A549 (cell line): ENCODE measurements at regions of chr1 and their contacts with region 1.

Region 1: GRCh38 chr1:17045634-17046333 is 8.0 kb downstream of the SDHB start:
- DNase-seq: peak; percentile 51 to 63
- ATAC-seq: peak in 1 of 2 experiments; percentile 58; a peak in 2 of 6 replicates
- H3K4me3 ChIP-seq: no peak overlapping the region
- H3K27ac ChIP-seq: no peak overlapping the region
- H3K4me1 ChIP-seq: peaks cover 6% of the 10 kb centered on the region; the same call in 1 of the 3 replicates
- CTCF ChIP-seq: peak; percentile 73
- EP300 ChIP-seq: no peak
- POLR2A ChIP-seq: no peak
- RAD21 ChIP-seq: peak; percentile 69 to 76

Region 2: DNA sequence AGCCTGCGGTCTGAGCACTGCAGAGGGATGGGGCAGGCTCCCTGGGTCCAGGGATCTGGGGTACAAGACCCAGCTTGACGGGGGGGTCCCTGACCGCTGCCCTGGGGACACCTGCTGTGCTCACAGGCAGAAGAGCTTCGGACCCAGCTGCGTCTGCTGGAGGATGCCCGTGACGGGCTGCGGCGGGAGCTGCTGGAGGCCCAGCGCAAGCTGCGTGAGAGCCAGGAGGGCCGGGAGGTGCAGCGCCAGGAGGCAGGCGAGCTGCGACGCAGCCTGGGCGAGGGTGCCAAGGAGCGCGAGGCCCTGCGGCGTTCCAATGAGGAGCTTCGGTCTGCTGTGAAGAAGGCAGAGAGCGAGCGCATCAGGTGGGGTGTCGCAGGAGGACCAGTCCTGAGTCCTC is 90.6 kb before region 1 on chr1:
- CTCF ChIA-PET with region 1: interaction called, 80 read pairs
- POLR2A ChIA-PET with region 1: no interaction called
- DNase-seq: no peak
- ATAC-seq: no peak
- H3K4me3 ChIP-seq: no peak overlapping the region
- H3K27ac ChIP-seq: no peak overlapping the region
- H3K4me1 ChIP-seq: peaks cover 2% of the 10 kb centered on the region
- CTCF ChIP-seq: no peak
- EP300 ChIP-seq: no peak
- POLR2A ChIP-seq: no peak
- RAD21 ChIP-seq: no peak

Region 3: DNA sequence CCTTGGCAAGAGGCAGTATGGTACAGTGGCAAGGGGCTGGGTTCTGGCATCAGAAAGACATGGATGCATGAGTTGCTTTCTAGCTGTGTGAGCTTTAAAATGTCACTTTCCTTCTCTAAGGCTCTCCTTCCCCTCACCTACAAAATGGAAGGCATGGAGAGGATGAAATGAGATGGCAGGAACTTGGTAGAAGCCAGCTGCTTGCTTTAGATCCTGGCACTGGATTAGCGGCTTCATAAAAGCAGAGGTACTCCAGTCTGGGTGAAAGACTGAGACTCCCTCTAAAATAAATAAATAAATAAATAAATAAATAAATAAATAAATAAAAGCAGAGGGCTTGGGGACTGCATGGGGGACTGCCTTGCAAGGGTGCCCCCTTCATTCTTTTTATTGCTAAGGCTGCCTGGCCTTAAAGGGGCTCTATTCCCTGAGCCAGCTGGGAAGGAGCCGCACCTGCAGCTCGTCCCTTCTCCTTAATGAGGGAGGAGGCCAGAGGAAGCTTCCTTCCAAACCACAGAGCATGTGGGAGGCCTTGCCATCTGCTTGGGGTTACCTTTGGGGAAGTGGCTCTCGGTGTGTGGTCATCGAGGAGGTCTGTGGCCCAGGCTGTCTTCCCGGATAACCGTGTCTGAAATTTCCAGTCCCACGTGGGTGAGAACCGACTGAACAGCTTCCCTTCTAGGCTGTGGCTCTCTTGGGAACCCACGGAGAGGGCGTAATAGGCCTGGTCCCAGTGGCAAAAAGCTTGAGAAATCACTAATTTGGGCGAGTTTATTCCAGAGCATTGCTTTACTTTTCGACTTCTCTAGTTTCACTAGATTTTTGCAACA is 32.1 kb before region 1 on chr1:
- CTCF ChIA-PET with region 1: interaction called, 15 read pairs
- POLR2A ChIA-PET with region 1: no interaction called
- DNase-seq: no peak
- ATAC-seq: no peak
- H3K4me3 ChIP-seq: no peak overlapping the region
- H3K27ac ChIP-seq: no peak overlapping the region
- H3K4me1 ChIP-seq: peaks cover 16% of the 10 kb centered on the region; the same call in 2 of the 3 replicates
- CTCF ChIP-seq: no peak
- EP300 ChIP-seq: no peak
- POLR2A ChIP-seq: no peak
- RAD21 ChIP-seq: no peak

Region 4: DNA sequence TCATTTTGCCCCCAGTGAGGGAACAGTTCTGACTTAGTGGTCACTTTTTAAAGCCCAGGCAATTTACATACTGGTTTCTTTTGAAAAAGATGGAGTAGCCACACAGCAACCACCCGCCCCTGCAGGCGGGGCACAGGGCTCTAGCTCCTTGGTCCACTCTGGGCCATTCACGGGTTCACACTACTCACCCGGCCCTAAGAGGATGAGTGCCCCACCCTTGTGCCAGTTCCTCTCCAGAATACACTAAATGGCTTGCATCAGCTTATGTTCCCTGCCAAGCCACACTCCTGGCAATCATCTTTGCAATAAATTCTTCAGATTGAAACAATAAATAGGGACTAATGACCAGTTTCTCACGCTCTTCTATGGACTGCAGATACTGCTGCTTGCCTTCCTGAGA is 18.4 kb before region 1 on chr1:
- CTCF ChIA-PET with region 1: interaction called, 15 read pairs
- POLR2A ChIA-PET with region 1: no interaction called
- DNase-seq: no peak
- ATAC-seq: no peak
- H3K4me3 ChIP-seq: no peak overlapping the region
- H3K27ac ChIP-seq: no peak overlapping the region
- H3K4me1 ChIP-seq: no peaks in the 10 kb centered on the region
- CTCF ChIP-seq: no peak
- EP300 ChIP-seq: no peak
- POLR2A ChIP-seq: no peak
- RAD21 ChIP-seq: no peak